ENCODE measurements at regions of chr20 and their contacts with region 1.

Region 1: GRCh38 chr20:38057351-38057972 is 23.9 kb downstream of the RPRD1B start:
- DNase-seq: peak; percentile 77 to 96
- ATAC-seq: peak; percentile 70

Region 2: DNA sequence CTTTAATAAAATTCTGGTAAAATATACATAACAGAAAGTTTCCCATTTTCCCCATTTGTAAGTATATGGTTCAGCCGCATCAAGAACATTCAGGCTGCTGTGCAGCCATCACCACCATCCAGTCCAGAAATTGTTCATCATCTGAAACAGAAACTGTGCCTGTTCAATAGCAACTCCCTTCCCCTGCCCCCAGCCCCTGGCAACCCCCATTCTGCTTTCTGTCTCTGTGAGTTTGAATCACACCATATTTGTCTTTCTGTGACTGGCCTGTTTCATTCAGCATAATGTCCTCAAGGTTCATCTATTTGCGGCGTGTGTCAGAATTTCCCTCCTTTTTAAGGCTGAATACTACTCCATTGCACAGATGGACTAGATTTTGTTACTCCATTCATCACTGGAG is 135.4 kb before region 1 on chr20:
- intact Hi-C with region 1: no loop called
- DNase-seq: no peak
- ATAC-seq: no peak

Region 3: DNA sequence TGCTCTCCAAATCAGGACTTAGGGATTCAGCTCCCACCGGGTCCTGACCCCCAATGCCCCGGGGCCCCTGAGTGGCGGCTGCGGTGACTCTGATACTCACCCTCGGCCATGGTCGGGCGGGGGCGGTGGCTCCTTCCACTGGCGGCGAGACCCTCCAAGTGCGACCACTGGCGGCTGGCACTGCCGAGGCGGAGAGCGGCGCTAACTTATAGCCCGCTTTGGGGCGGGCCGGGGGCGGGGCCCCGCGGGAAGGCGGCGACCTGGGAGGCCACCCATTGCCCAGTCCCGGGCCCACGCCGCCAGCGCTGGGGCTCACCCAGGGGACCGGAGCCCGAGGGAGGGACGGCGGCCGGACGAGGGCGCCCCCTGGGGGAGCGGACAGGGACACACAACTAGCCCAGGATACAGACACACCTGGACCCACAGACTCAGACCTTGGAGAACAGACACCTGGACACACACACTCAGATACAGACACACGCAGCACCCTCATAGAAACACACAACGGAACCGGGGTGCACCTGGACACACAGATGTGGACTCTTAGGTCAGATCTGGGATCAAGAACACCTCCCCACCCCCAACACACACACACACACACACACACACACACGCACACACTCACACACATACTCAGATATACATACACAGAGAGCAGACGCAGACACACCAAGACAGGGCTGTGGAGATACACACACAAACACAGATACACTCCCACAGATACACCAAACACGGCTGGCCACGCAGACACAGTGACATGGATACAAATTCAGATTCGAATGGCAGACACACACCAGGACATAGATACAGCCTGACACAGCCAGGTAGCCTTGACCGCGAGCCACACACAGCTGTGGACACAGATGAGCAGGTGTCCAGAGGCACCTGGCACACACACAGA is 107.9 kb after region 1 on chr20 and contains the start of gene TGM2:
- intact Hi-C with region 1: loop called in 1 of 2 experiments (anchors 10 kb)
- DNase-seq: peak; percentile 73 to 79
- ATAC-seq: peak; percentile 95
- total RNA-seq, gene TGM2: 26.9 to 33.9 TPM

Region 4: GRCh38 chr20:38221119-38221589 is 163.7 kb after region 1 on chr20:
- intact Hi-C with region 1: loop called in 1 of 2 experiments (anchors 2 kb)
- DNase-seq: peak; percentile 36 to 70
- ATAC-seq: peak; percentile 77

Measured in left colon (tissue), 2 donors.